ENCODE measurements at regions of chr5 and their contacts with region 1.

Region 1: DNA sequence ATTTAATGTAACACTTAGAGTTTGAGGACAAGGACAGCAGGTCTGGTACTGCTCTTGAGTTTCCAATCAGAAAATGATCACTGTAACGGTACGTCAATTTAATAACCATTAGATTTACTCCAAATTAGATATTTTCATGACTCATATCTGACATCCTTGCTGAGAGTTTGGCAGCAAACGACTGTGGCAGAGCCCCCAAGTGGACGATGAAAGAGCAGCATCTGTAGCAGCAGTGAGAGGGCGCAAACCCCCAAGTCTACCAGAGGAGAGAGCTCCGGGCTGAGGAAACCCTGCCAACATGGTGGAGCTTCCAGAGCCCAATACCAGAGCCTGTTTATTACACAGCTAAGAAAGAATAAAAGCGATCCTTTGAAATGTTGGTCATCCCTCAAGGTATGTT is 73.2 kb upstream of the EPB41L4A start:
- DNase-seq: peak; percentile 21
- H3K4me3 ChIP-seq: no peak overlapping the region
- H3K27ac ChIP-seq: no peak overlapping the region
- H3K27me3 ChIP-seq: no peaks in the 10 kb centered on the region
- CTCF ChIP-seq: peak; percentile 79

Region 2: DNA sequence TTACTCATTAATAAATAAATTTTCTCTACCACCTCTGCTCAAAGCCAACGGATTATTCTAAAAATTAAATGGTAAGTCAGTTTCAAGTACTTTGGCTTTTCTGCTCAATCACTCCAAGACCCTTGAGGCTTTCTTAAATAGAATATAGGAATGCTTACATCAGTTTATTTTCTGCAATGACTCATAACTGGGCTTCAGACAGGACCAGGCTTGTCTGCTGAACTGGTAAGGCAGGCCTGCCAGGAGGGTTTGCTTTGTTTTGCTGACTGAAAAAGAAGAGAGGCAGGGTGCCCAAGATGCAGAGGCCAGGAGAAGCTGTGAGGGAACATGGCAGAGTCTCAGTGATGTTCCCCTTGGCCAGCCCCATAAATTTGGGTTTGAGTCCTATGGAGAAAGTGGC is 12.9 kb before region 1 on chr5:
- CTCF ChIA-PET with region 1: interaction called, 15 read pairs
- POLR2A ChIA-PET with region 1: no interaction called
- DNase-seq: peak; percentile 3
- H3K4me3 ChIP-seq: no peak overlapping the region
- H3K27ac ChIP-seq: no peak overlapping the region
- H3K27me3 ChIP-seq: no peaks in the 10 kb centered on the region
- CTCF ChIP-seq: no peak

Region 3: DNA sequence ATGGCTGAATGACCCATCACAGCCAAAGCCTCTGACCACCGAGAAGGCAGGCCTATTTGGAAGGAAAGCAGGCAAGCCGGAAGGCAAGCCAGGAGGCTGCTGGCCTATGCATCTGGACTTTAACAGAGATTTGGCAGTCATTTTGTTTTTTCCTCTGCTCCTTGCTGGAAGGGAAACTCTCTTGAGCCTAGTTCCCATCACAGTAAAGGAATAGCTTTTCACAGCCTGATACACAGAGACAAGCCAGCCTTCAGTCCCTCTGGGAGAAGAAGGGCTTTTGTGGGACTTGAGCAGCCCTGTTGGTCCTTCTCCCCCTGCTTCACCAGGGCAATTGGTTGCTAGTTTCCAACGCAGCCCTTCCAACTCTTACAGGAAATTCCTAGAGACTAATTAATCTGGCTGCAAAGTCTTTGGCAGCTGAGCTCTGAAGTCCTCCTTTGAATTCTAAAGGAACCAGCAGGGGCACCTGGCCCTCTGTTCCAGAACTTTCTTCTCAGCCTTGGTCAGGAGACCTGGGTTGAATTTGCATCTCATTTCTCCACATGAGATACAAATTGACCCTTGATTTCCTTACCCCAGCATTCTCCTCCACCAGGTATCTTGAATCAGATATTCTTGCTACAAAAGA is 84.1 kb after region 1 on chr5:
- CTCF ChIA-PET with region 1: no interaction called
- POLR2A ChIA-PET with region 1: no interaction called
- DNase-seq: no peak
- H3K4me3 ChIP-seq: no peak overlapping the region
- H3K27ac ChIP-seq: no peak overlapping the region
- H3K27me3 ChIP-seq: no peaks in the 10 kb centered on the region
- CTCF ChIP-seq: no peak

Measured in AG04450 (cell line).